Psoas muscle (tissue), 8 donors: ENCODE measurements at regions of chr20 and their contacts with region 1.

Region 1: GRCh38 chr20:49496553-49497397 is 14.3 kb upstream of the KCNB1 start:
- DNase-seq: no peak
- ATAC-seq: peak in 2 of 4 donors; percentile 46 to 73
- H3K4me3 ChIP-seq: no peak overlapping the region
- H3K27ac ChIP-seq: no peak overlapping the region
- H3K4me1 ChIP-seq: no peaks in the 10 kb centered on the region
- H3K27me3 ChIP-seq: no peaks in the 10 kb centered on the region
- CTCF ChIP-seq: no peak

Region 2: GRCh38 chr20:49435659-49436058 is 61.1 kb before region 1 on chr20:
- intact Hi-C with region 1: loop called in 1 of 2 experiments (anchors 10 kb)
- DNase-seq: no peak
- ATAC-seq: no peak
- H3K4me3 ChIP-seq: no peak overlapping the region
- H3K27ac ChIP-seq: no peak overlapping the region
- H3K4me1 ChIP-seq: peaks cover 4% of the 10 kb centered on the region
- H3K27me3 ChIP-seq: no peaks in the 10 kb centered on the region
- CTCF ChIP-seq: no peak

Region 3: GRCh38 chr20:49534255-49534712 is 37.5 kb after region 1 on chr20:
- intact Hi-C with region 1: no loop called
- DNase-seq: no peak
- ATAC-seq: peak; percentile 69 to 83 (median 76)
- H3K4me3 ChIP-seq: no peak overlapping the region
- H3K27ac ChIP-seq: no peak overlapping the region
- H3K4me1 ChIP-seq: no peaks in the 10 kb centered on the region
- H3K27me3 ChIP-seq: no peaks in the 10 kb centered on the region
- CTCF ChIP-seq: peak; percentile 77